GM12878 (cell line): ENCODE measurements at regions of chr2 and their contacts with region 1.

Region 1: GRCh38 chr2:149561309-149561926 is 26.2 kb downstream of the MMADHC start:
- DNase-seq: no peak
- ATAC-seq: peak; percentile 57
- H3K4me3 ChIP-seq: no peak overlapping the region
- H3K27ac ChIP-seq: no peak overlapping the region
- H3K4me1 ChIP-seq: no peaks in the 10 kb centered on the region
- H3K27me3 ChIP-seq: no peaks in the 10 kb centered on the region
- CTCF ChIP-seq: peak; percentile 58 to 78 (median 74)
- EP300 ChIP-seq: no peak
- POLR2A ChIP-seq: no peak
- RAD21 ChIP-seq: peak; percentile 88

Region 2: DNA sequence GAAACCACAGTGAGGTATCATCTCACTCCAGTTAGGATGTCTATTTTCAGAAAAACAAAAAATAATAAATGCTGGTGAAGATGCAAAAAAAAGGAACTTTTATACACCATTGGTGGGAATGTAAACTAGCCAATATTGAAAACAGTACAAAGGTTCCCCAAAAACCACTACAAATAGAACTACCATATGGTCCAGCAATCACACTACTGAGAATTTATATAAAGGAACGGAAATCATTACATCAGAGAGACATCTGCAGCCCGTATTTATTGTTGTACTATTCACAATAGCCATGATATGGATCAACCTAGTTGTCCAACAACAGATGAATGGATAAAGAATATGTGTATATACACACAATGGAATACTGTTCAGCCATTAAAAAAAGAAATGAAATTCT is 1592.8 kb before region 1 on chr2:
- CTCF ChIA-PET with region 1: no interaction called
- POLR2A ChIA-PET with region 1: no interaction called
- RAD21 ChIA-PET with region 1: no interaction called
- SMC1A ChIA-PET with region 1: no interaction called
- in situ Hi-C with region 1: loop called (anchors 25 kb)
- intact Hi-C with region 1: no loop called
- DNase-seq: no peak
- ATAC-seq: no peak
- H3K4me3 ChIP-seq: no peak overlapping the region
- H3K27ac ChIP-seq: no peak overlapping the region
- H3K4me1 ChIP-seq: no peaks in the 10 kb centered on the region
- H3K27me3 ChIP-seq: no peaks in the 10 kb centered on the region
- CTCF ChIP-seq: no peak
- EP300 ChIP-seq: no peak
- POLR2A ChIP-seq: no peak
- RAD21 ChIP-seq: no peak

Region 3: GRCh38 chr2:149040451-149040850 is 521.0 kb before region 1 on chr2:
- CTCF ChIA-PET with region 1: interaction called, 15 read pairs
- POLR2A ChIA-PET with region 1: no interaction called
- RAD21 ChIA-PET with region 1: interaction called, 6 read pairs
- SMC1A ChIA-PET with region 1: interaction called, 5 read pairs
- in situ Hi-C with region 1: no loop called
- intact Hi-C with region 1: loop called (anchors 1 kb)
- DNase-seq: no peak
- ATAC-seq: peak; percentile 78
- H3K4me3 ChIP-seq: no peak overlapping the region
- H3K27ac ChIP-seq: no peak overlapping the region
- H3K4me1 ChIP-seq: peaks cover 17% of the 10 kb centered on the region
- H3K27me3 ChIP-seq: no peaks in the 10 kb centered on the region
- CTCF ChIP-seq: peak; percentile 52 to 78 (median 77)
- EP300 ChIP-seq: no peak
- POLR2A ChIP-seq: no peak
- RAD21 ChIP-seq: peak; percentile 61

Region 4: GRCh38 chr2:149271575-149271974 is 289.8 kb before region 1 on chr2:
- CTCF ChIA-PET with region 1: no interaction called
- POLR2A ChIA-PET with region 1: no interaction called
- RAD21 ChIA-PET with region 1: no interaction called
- SMC1A ChIA-PET with region 1: no interaction called
- in situ Hi-C with region 1: no loop called
- intact Hi-C with region 1: no loop called
- DNase-seq: peak; percentile 48
- ATAC-seq: peak; percentile 79
- H3K4me3 ChIP-seq: no peak overlapping the region
- H3K27ac ChIP-seq: no peak overlapping the region
- H3K4me1 ChIP-seq: peaks cover 10% of the 10 kb centered on the region
- H3K27me3 ChIP-seq: no peaks in the 10 kb centered on the region
- CTCF ChIP-seq: no peak
- EP300 ChIP-seq: no peak
- POLR2A ChIP-seq: no peak
- RAD21 ChIP-seq: no peak

Region 5: DNA sequence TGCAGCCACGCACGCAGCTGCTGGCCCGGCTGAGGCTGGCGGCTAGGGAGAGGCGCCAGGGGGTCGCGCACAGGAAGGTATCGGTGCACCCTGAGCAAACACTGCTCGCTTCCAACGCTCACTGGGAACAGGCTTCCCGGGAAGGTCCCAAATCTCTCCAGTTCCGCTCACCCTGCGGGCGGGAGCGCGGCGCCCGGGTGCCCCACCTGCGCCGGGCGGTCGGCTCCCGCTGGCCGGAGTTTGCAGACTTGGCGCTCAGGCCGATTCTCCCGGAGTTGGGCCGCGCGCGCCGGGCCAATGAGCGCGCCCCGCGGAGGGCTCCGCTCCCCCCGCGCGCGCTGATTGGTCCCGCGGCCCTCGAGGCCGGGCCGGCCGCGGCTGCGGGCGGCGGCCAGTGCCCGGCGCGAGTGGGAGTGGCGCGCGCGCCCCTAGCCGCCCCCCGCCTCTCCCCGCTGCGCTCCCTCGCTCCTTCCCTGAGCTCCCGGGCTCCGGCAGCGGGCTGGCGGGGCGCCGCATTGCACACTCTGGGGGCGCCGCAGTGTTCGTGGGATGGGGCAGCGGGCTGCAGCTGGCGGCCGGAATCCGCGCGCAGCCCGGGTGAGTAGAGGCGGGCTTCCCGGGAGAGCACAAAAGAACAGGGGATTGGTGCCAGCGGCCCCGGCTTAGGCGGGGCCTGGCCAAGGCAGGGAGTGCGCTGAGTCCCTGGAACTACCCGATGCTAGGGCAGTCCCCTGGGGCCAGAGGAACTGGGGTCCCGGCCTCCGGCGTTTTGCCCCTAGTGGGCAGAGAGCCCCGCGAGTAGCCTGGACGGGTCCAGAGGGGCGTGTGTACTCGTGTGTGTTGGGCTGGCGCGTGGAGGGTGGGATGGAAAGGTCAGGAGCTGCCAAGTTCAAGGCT is 231.0 kb before region 1 on chr2 and contains the start of gene LYPD6:
- CTCF ChIA-PET with region 1: no interaction called
- POLR2A ChIA-PET with region 1: no interaction called
- RAD21 ChIA-PET with region 1: no interaction called
- SMC1A ChIA-PET with region 1: no interaction called
- in situ Hi-C with region 1: no loop called
- intact Hi-C with region 1: loop called (anchors 5 kb)
- DNase-seq: no peak
- ATAC-seq: peak; percentile 92
- H3K4me3 ChIP-seq: peak within 1 kb of the TSS; percentile 75
- H3K27ac ChIP-seq: no peak within 1 kb of the TSS
- H3K4me1 ChIP-seq: no peaks in the 10 kb centered on the region
- H3K27me3 ChIP-seq: peaks cover 2 to 9% of the 10 kb centered on the region in 2 experiments
- CTCF ChIP-seq: no peak
- EP300 ChIP-seq: no peak
- POLR2A ChIP-seq: no peak
- RAD21 ChIP-seq: no peak
- polyA plus RNA-seq, gene LYPD6: not detected

Region 6: DNA sequence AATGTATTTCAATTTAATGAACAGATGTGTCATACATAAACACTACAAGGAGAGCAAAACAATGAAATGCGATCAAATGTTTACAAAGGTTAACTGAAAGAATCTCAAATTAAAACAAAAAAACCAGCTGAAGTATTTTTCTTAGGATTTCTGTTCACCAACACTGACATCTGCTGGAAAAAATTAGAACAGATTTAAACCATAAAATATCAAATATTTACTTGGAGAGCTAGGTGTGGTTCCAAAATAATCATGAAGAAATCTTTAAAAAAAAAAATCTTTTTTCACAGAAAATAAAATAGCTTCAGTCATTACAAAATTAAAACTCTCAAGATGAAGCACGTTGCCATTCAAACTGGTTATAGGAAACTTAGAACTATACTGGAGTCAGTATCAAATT is 12.3 kb after region 1 on chr2:
- CTCF ChIA-PET with region 1: interaction called, 15 read pairs
- POLR2A ChIA-PET with region 1: no interaction called
- RAD21 ChIA-PET with region 1: no interaction called
- SMC1A ChIA-PET with region 1: interaction called, 8 read pairs
- in situ Hi-C with region 1: no loop called
- intact Hi-C with region 1: no loop called
- DNase-seq: no peak
- ATAC-seq: no peak
- H3K4me3 ChIP-seq: no peak overlapping the region
- H3K27ac ChIP-seq: no peak overlapping the region
- H3K4me1 ChIP-seq: no peaks in the 10 kb centered on the region
- H3K27me3 ChIP-seq: no peaks in the 10 kb centered on the region
- CTCF ChIP-seq: peak in 1 of 3 experiments; percentile 2; a peak in 1 of 6 replicates
- EP300 ChIP-seq: no peak
- POLR2A ChIP-seq: no peak
- RAD21 ChIP-seq: no peak